PC-9 (cell line): ENCODE measurements at regions of chr1 and their contacts with region 1.

Region 1: DNA sequence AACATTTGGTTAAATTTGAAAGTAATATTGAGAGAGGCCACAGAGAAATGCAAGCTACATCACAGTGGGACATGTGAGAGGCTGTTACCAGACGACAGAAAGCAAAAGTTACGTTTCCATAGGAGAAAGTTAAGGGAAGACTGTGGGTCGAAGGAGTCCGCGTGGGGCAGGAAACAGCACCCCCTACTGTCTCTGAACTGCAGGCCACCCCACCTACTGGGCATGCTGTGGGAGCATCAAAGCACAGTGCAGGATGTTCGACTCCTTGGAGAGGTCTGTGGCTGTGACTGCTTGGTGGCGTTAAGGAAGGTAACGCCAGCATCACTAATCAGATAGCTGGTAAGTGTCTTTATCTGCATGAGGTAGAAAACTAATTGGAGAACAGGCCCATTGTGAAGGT is 123.9 kb downstream of the PTBP2 start:
- DNase-seq: no peak
- H3K4me3 ChIP-seq: no peak overlapping the region
- H3K27ac ChIP-seq: no peak overlapping the region
- H3K4me1 ChIP-seq: no peaks in the 10 kb centered on the region
- H3K27me3 ChIP-seq: no peaks in the 10 kb centered on the region
- CTCF ChIP-seq: peak; percentile 59

Region 2: DNA sequence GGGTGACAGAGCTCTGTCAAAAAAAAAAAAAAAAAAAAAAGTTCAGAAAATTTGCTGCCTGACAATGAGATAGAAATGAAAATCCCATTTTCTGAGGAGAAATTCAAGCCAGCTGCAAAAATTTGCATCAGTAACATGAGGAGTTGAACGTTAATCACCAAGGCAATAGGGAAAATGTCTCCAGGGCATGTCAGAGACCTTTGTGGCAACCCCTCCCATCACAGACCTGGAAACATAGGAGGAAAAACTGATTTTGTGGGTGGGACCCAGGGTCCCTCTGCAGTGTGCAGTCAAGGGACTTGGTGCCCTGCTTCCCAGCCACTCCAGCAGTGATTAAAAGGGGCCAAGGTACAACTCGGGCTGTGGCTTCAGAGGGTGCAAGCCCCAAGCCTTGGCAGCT is 996.0 kb before region 1 on chr1:
- CTCF ChIA-PET with region 1: interaction called, 15 read pairs
- POLR2A ChIA-PET with region 1: no interaction called
- intact Hi-C with region 1: no loop called
- DNase-seq: no peak
- H3K4me3 ChIP-seq: no peak overlapping the region
- H3K27ac ChIP-seq: no peak overlapping the region
- H3K4me1 ChIP-seq: no peaks in the 10 kb centered on the region
- H3K27me3 ChIP-seq: no peaks in the 10 kb centered on the region
- CTCF ChIP-seq: no peak

Region 3: GRCh38 chr1:96721416-96722160 is 123.9 kb before region 1 on chr1 and contains the start of gene PTBP2:
- CTCF ChIA-PET with region 1: no interaction called
- POLR2A ChIA-PET with region 1: no interaction called
- intact Hi-C with region 1: no loop called
- DNase-seq: peak; percentile 63 to 77
- H3K4me3 ChIP-seq: peak within 1 kb of the TSS; percentile 92
- H3K27ac ChIP-seq: peak within 1 kb of the TSS; percentile 53
- H3K4me1 ChIP-seq: peaks cover 17% of the 10 kb centered on the region
- H3K27me3 ChIP-seq: no peaks in the 10 kb centered on the region
- CTCF ChIP-seq: no peak
- total RNA-seq, gene PTBP2: 11.5 and 14.0 TPM in 2 replicates